ENCODE measurements at regions of chr16 and their contacts with region 1.

Region 1: DNA sequence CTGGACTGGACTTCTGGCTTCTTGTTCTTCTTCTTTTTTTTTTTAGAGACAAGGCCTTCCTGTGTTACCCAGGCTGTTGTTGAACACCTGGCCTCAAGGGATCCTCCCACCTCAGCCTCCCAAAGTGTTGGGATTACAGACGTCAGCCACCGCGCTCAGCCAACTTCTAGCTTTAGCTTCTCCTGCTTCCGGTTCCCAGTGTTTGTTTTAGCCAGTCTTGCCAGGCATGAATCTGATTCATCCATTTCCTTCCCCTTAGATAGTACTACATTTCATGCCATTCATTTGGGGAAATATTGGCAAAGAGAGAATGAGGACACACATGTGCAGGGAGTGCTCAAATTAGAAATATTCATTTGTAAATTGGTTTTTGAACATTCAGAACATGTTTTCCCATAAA is 12.1 kb upstream of the NDUFAB1 start:
- DNase-seq: no peak
- ATAC-seq: no peak
- H3K4me3 ChIP-seq: no peak overlapping the region
- H3K27ac ChIP-seq: no peak overlapping the region
- H3K4me1 ChIP-seq: no peaks in the 10 kb centered on the region
- H3K27me3 ChIP-seq: no peaks in the 10 kb centered on the region
- CTCF ChIP-seq: no peak
- POLR2A ChIP-seq: no peak

Region 2: GRCh38 chr16:23539984-23540816 is 68.0 kb before region 1 on chr16:
- in situ Hi-C with region 1: loop called in 1 of 4 experiments (anchors 10 kb)
- intact Hi-C with region 1: no loop called
- DNase-seq: no peak
- ATAC-seq: no peak
- H3K4me3 ChIP-seq: no peak overlapping the region
- H3K27ac ChIP-seq: no peak overlapping the region
- H3K4me1 ChIP-seq: no peaks in the 10 kb centered on the region
- H3K27me3 ChIP-seq: no peaks in the 10 kb centered on the region
- CTCF ChIP-seq: no peak
- POLR2A ChIP-seq: no peak

Region 3: DNA sequence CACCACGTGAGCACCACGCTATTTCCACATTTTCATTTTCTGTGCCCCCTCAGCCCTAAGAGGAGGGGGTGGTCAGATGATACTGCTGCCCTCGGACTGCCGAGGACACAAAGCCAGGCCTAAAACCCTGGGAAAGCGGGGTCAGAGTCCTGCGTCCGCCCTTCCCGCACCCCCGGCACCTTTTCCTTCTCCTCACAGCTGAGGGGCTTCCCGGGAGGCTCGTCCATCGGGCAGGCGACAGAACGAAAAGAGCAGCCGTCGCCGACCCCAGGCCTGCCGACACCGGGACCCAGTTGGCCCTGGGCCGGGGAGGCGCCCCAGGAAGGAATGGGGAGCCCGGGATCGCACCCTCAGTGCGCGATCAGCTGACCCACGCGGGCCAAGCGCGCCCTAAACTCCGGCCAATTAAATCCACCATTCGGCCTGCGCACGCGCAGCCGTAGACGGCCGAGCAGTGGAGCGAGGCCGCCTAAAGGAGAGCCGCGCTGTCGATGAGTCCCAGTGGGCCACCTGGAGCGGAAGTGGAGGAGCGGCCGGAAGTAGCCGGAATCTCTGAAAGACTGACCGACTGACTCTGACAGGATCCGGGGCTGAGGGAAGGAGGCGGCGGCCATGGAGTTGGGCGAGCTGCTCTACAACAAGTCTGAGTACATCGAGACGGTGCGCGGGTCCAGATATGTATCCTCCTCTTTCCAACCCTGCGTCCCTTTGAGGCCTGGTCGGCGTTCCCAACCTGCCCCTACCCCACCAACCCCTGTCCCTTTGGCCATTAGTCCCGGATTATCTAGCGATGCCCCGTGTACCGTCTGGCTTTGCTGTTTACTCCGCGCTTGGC is 33.0 kb after region 1 on chr16 and contains the starts of genes DCTN5 and PALB2:
- in situ Hi-C with region 1: no loop called
- intact Hi-C with region 1: no loop called
- DNase-seq: peak; percentile 90 to 94
- ATAC-seq: peak; percentile 99 to 100
- H3K4me3 ChIP-seq: peak within 1 kb of the TSS; percentile 89 to 100 (median 96)
- H3K27ac ChIP-seq: peak within 1 kb of the TSS; percentile 89 to 95 (median 92)
- H3K4me1 ChIP-seq: peaks cover 20 to 23% of the 10 kb centered on the region in 2 donors
- H3K27me3 ChIP-seq: no peaks in the 10 kb centered on the region
- CTCF ChIP-seq: peak in 2 of 5 experiments; percentile 11 to 13
- POLR2A ChIP-seq: peak; percentile 48 to 67
- total RNA-seq, gene DCTN5: 22.9 to 34.4 (median 24.8) TPM
- total RNA-seq, gene PALB2: 6.0 to 11.0 (median 7.3) TPM